Dendritic cell treated with granulocyte-macrophage colony-stimulating factor and Interleukin-4, amounts not matched to agents 40 ng/mL and 50 ng/mL, for 4 days (primary cell): ENCODE measurements at regions of chr17 and their contacts with region 1.

Region 1: DNA sequence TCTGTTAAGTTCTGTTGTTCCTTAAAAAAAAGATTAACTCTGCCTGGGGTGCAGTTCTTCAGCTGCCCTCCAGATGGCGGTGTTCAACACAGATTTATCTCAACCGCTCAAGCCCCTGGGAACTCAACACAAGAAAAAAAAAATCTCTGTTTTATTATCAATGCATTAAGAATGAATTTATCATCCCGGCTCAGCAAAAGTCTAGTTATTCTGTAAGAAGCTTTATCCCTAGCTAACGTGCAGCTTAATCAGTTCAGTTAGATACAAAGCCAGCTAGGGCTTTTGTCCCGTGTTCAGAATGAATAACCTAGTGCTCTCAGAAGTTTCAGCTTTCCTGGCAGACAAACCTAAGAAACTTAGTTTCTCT is 475.9 kb upstream of the CCL2 start:
- H3K4me3 Mint-ChIP-seq: no peak overlapping the region
- H3K27ac Mint-ChIP-seq: no peak overlapping the region
- H3K4me1 Mint-ChIP-seq: peaks cover 6% of the 10 kb centered on the region
- H3K27me3 Mint-ChIP-seq: peaks cover 4% of the 10 kb centered on the region

Region 2: GRCh38 chr17:33949100-33949499 is 169.9 kb after region 1 on chr17:
- intact Hi-C with region 1: loop called (anchors 2 kb)
- H3K4me3 Mint-ChIP-seq: no peak overlapping the region
- H3K27ac Mint-ChIP-seq: no peak overlapping the region
- H3K4me1 Mint-ChIP-seq: peaks cover 6% of the 10 kb centered on the region
- H3K27me3 Mint-ChIP-seq: no peaks in the 10 kb centered on the region

Region 3: GRCh38 chr17:34163646-34164045 is 384.4 kb after region 1 on chr17:
- intact Hi-C with region 1: loop called (anchors 1 kb)
- H3K4me3 Mint-ChIP-seq: no peak overlapping the region
- H3K27ac Mint-ChIP-seq: no peak overlapping the region
- H3K4me1 Mint-ChIP-seq: peaks cover 14% of the 10 kb centered on the region
- H3K27me3 Mint-ChIP-seq: peaks cover 32% of the 10 kb centered on the region